CD14-positive monocyte (primary cell): ENCODE measurements at regions of chr2 and their contacts with region 1.

Region 1: DNA sequence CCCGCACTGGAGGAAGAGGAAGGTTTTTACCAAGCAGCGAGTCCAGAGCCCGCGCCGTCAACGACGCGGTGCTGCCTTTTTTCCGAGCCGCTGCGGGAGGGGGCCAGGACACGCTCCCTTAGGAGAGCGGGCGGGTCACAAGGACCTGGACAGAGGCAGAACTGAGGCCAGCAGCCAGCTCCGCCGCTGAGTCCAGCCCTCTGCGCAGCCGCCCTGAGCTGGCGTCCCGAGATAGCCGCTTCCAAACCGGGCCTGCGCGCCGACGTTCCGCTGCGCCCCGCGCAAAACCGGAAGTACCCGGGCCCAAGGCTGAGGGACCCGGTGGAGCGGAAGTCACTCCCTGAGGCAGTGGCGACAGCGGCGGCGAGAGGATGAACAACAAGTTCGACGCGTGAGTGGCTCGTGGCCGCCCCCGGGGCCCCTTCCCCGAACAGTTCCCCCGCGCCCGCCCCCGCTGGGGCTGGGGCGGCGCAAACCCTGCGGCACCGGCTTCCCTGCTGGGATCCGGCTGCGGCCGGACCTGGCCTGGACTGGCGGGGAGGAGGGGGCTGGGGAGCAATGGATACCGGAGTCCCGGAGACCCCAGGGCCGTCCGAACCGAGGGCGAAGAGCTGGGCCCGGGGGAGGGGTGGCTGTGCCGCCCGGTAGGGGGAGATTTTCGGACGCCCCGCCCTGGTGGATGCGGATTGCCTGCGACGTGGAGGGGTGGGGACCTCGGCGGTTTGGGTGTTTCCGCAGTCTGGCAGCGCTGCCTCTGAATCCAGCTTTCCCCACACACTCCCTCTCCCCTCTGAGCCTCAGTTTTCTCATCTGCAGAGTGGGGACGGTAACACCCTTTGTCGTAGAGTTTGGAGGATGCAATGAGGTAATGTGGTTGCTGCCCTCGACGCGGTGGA is at the starts of genes EIF4E2 and TIGD1:
- DNase-seq: peak; percentile 90 to 94 (median 93)
- H3K4me3 ChIP-seq: peak within 1 kb of the TSS; percentile 64 to 88 (median 74)
- H3K4me3 Mint-ChIP-seq: peak within 1 kb of the TSS; percentile 97 to 99
- H3K27ac ChIP-seq: peak within 1 kb of the TSS; percentile 94
- H3K27ac Mint-ChIP-seq: peak within 1 kb of the TSS; percentile 95 to 98 (median 96)
- H3K4me1 ChIP-seq: peaks cover 46 to 62% of the 10 kb centered on the region in 2 donors
- H3K4me1 Mint-ChIP-seq: peaks cover 71% of the 10 kb centered on the region
- H3K27me3 ChIP-seq: no peaks in the 10 kb centered on the region
- H3K27me3 Mint-ChIP-seq: peaks cover 0 to 1% (median 0%) of the 10 kb centered on the region in 3 donors
- CTCF ChIP-seq: peak; percentile 43
- polyA plus RNA-seq, gene EIF4E2: 67.2 to 213 (median 188) TPM
- polyA plus RNA-seq, gene TIGD1: 1.6 to 4.1 (median 2.1) TPM

Region 2: DNA sequence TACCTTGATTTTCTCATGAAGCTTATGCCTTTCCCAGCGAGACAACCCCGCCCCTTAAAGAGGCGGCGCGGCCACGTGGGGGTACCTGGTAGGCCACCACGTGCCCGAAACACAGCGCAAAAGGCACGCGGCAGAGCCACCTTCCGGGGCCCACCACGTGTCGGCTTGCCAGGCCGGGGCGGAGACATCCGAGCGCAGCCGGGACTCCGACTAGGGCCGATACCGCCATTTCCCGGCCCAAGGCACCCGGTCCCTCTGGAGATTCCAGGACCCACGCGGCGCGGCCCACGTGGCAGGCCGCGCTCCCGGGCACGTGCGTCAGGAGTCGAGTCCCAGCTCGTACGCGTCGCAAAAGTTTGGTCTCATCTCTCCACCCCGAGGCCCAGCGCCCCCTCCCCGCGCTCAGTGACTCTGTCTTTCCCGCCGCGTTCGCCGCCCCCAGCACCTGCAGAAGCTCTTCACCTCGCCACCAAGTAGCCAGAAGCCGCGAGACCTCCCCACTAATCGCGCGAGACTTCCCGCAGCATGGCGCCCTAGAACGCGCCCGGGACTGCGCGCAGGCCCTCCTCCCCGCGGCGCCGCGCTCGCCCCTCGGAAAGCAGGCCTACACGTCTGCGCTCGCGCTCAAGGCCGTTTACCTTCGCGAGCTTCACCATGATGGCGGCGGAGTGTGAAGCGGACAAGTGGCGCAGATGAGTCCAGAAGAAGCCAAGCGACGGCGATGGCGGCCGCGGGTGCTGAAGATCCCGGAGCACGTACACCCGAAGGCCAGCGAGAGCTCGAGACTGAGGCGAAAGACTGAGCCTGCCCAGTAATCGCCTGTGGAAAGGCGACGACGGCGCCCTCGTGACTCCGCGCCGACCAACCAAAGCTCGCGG is 1086.7 kb before region 1 on chr2 and contains the start of gene NCL:
- intact Hi-C with region 1: loop called in 1 of 2 experiments (anchors 10 kb)
- DNase-seq: peak; percentile 96 to 97 (median 97)
- H3K4me3 ChIP-seq: peak within 1 kb of the TSS; percentile 75 to 93 (median 85)
- H3K4me3 Mint-ChIP-seq: peak within 1 kb of the TSS; percentile 94 to 96
- H3K27ac ChIP-seq: peak within 1 kb of the TSS; percentile 91 to 98
- H3K27ac Mint-ChIP-seq: peak within 1 kb of the TSS; percentile 97 to 99 (median 99)
- H3K4me1 ChIP-seq: peaks cover 30 to 38% of the 10 kb centered on the region in 2 donors
- H3K4me1 Mint-ChIP-seq: peaks cover 32% of the 10 kb centered on the region
- H3K27me3 ChIP-seq: no peaks in the 10 kb centered on the region
- H3K27me3 Mint-ChIP-seq: peaks cover 0 to 2% (median 0%) of the 10 kb centered on the region in 3 donors
- CTCF ChIP-seq: no peak
- polyA plus RNA-seq, gene NCL: 26.2 to 143 (median 106) TPM

Region 3: GRCh38 chr2:231780909-231781797 is 769.4 kb before region 1 on chr2 and contains the start of gene PDE6D:
- intact Hi-C with region 1: loop called in 1 of 2 experiments (anchors 2 kb)
- DNase-seq: peak; percentile 95 to 96 (median 95)
- H3K4me3 ChIP-seq: peak within 1 kb of the TSS; percentile 81 to 97 (median 94)
- H3K4me3 Mint-ChIP-seq: peak within 1 kb of the TSS; percentile 97 to 98
- H3K27ac ChIP-seq: peak within 1 kb of the TSS; percentile 33 to 86
- H3K27ac Mint-ChIP-seq: peak within 1 kb of the TSS; percentile 93 to 98 (median 97)
- H3K4me1 ChIP-seq: peaks cover 24 to 37% of the 10 kb centered on the region in 2 donors
- H3K4me1 Mint-ChIP-seq: peaks cover 37% of the 10 kb centered on the region
- H3K27me3 ChIP-seq: peaks cover 0 to 9% of the 10 kb centered on the region in 2 donors
- H3K27me3 Mint-ChIP-seq: peaks cover 4 to 13% (median 7%) of the 10 kb centered on the region in 3 donors
- CTCF ChIP-seq: no peak
- polyA plus RNA-seq, gene PDE6D: 28.4 to 54.6 (median 50.5) TPM

Region 4: GRCh38 chr2:232697100-232697865 is 146.7 kb after region 1 on chr2 and contains the start of gene GIGYF2:
- intact Hi-C with region 1: loop called (anchors 10 kb)
- DNase-seq: peak; percentile 91 to 93 (median 92)
- H3K4me3 ChIP-seq: peak within 1 kb of the TSS; percentile 68 to 91 (median 87)
- H3K4me3 Mint-ChIP-seq: peak within 1 kb of the TSS; percentile 90 to 96
- H3K27ac ChIP-seq: peak within 1 kb of the TSS; percentile 87 to 95
- H3K27ac Mint-ChIP-seq: peak within 1 kb of the TSS; percentile 89 to 96 (median 93)
- H3K4me1 ChIP-seq: peaks cover 21 to 33% of the 10 kb centered on the region in 2 donors
- H3K4me1 Mint-ChIP-seq: peaks cover 34% of the 10 kb centered on the region
- H3K27me3 ChIP-seq: no peaks in the 10 kb centered on the region
- H3K27me3 Mint-ChIP-seq: peaks cover 2 to 5% (median 4%) of the 10 kb centered on the region in 3 donors
- CTCF ChIP-seq: no peak
- polyA plus RNA-seq, gene GIGYF2: 7.7 to 20.7 (median 17.3) TPM